ENCODE measurements at regions of chr2 and their contacts with region 1.

Region 1: GRCh38 chr2:230824406-230824978 is 40.2 kb upstream of the ITM2C start:
- DNase-seq: peak in 8 of 9 donors; percentile 36 to 76 (median 71)
- ATAC-seq: peak; percentile 84
- H3K4me3 ChIP-seq: no peak overlapping the region
- H3K4me3 Mint-ChIP-seq: peak overlapping the region in 9 of 10 donors; percentile 1 to 77 (median 23)
- H3K27ac ChIP-seq: no peak overlapping the region
- H3K27ac Mint-ChIP-seq: peak overlapping the region in 4 of 9 donors; percentile 21 to 64 (median 40)
- H3K4me1 ChIP-seq: no peaks in the 10 kb centered on the region
- H3K4me1 Mint-ChIP-seq: peaks cover 0 to 25% (median 9%) of the 10 kb centered on the region in 7 donors
- H3K27me3 ChIP-seq: peaks cover 0 to 5% of the 10 kb centered on the region in 2 donors
- H3K27me3 Mint-ChIP-seq: peaks cover 20 to 42% (median 30%) of the 10 kb centered on the region in 5 donors

Region 2: GRCh38 chr2:230840301-230840700 is 15.8 kb after region 1 on chr2:
- CTCF ChIA-PET with region 1: interaction called, 12 read pairs
- POLR2A ChIA-PET with region 1: no interaction called
- intact Hi-C with region 1: no loop called
- DNase-seq: no peak
- ATAC-seq: no peak
- H3K4me3 ChIP-seq: no peak overlapping the region
- H3K4me3 Mint-ChIP-seq: no peak overlapping the region
- H3K27ac ChIP-seq: no peak overlapping the region
- H3K27ac Mint-ChIP-seq: no peak overlapping the region
- H3K4me1 ChIP-seq: no peaks in the 10 kb centered on the region
- H3K4me1 Mint-ChIP-seq: peaks cover 0 to 10% (median 4%) of the 10 kb centered on the region in 7 donors
- H3K27me3 ChIP-seq: no peaks in the 10 kb centered on the region
- H3K27me3 Mint-ChIP-seq: peaks cover 0 to 31% (median 8%) of the 10 kb centered on the region in 5 donors

Region 3: GRCh38 chr2:230847883-230848388 is 23.4 kb after region 1 on chr2:
- CTCF ChIA-PET with region 1: interaction called, 5 read pairs
- POLR2A ChIA-PET with region 1: no interaction called
- intact Hi-C with region 1: loop called (anchors 1 kb)
- DNase-seq: peak; percentile 53 to 90 (median 75)
- ATAC-seq: peak; percentile 94
- H3K4me3 ChIP-seq: no peak overlapping the region
- H3K4me3 Mint-ChIP-seq: peak overlapping the region in 3 of 10 donors; percentile 18 to 68 (median 37)
- H3K27ac ChIP-seq: no peak overlapping the region
- H3K27ac Mint-ChIP-seq: peak overlapping the region in 1 of 9 donors; percentile 18
- H3K4me1 ChIP-seq: peaks cover 0 to 3% of the 10 kb centered on the region in 2 donors
- H3K4me1 Mint-ChIP-seq: peaks cover 3 to 12% (median 6%) of the 10 kb centered on the region in 7 donors
- H3K27me3 ChIP-seq: no peaks in the 10 kb centered on the region
- H3K27me3 Mint-ChIP-seq: peaks cover 10 to 58% (median 32%) of the 10 kb centered on the region in 5 donors

Region 4: GRCh38 chr2:230902180-230902899 is 77.8 kb after region 1 on chr2:
- CTCF ChIA-PET with region 1: no interaction called
- POLR2A ChIA-PET with region 1: no interaction called
- intact Hi-C with region 1: loop called (anchors 1 to 10 kb)
- DNase-seq: peak in 4 of 9 donors; percentile 22 to 49 (median 32)
- ATAC-seq: peak; percentile 71
- H3K4me3 ChIP-seq: no peak overlapping the region
- H3K4me3 Mint-ChIP-seq: no peak overlapping the region
- H3K27ac ChIP-seq: no peak overlapping the region
- H3K27ac Mint-ChIP-seq: peak overlapping the region in 1 of 9 donors; percentile 21
- H3K4me1 ChIP-seq: peaks cover 6 to 13% of the 10 kb centered on the region in 2 donors
- H3K4me1 Mint-ChIP-seq: peaks cover 2 to 25% (median 23%) of the 10 kb centered on the region in 7 donors
- H3K27me3 ChIP-seq: no peaks in the 10 kb centered on the region
- H3K27me3 Mint-ChIP-seq: peaks cover 0 to 46% (median 6%) of the 10 kb centered on the region in 5 donors

Region 5: DNA sequence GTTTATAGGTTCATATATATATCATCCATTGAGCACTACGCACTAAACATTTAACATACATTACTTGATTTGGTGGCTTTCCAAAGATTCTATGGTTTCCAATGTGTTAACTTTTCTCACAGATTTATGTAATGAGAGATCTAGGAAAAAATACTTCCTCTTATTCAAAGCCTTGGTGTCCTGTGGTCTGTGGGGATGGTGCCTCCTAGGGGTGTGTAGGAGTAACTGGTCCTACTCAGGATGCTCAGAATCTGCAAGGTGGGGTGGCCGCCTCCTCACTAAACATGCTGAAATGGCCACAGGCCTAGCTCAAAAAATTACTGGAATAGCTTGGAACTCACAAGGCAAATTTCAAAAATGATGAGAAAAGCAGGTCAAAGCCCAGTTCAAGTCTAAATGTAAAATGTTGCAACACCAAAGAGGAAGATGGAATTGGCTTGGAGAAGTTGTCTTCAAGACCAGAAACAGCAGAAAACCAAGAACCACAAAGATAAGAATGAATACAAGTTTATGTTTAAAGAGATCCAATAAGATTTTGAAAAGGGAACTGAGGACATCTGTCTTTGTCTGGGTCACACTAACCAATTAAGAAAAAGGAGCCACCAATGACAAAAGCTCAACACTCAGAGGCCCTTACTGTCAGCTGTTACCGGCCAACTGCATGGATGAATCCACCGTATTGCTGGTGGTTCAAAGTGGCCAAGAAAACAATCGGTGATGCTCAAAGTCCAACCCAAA is 89.1 kb after region 1 on chr2:
- CTCF ChIA-PET with region 1: interaction called, 9 read pairs
- POLR2A ChIA-PET with region 1: no interaction called
- intact Hi-C with region 1: loop called (anchors 1 to 10 kb)
- DNase-seq: peak in 4 of 9 donors; percentile 22 to 36 (median 29)
- ATAC-seq: peak; percentile 78
- H3K4me3 ChIP-seq: no peak overlapping the region
- H3K4me3 Mint-ChIP-seq: no peak overlapping the region
- H3K27ac ChIP-seq: no peak overlapping the region
- H3K27ac Mint-ChIP-seq: peak overlapping the region in 1 of 9 donors; percentile 7
- H3K4me1 ChIP-seq: no peaks in the 10 kb centered on the region
- H3K4me1 Mint-ChIP-seq: peaks cover 0 to 27% (median 15%) of the 10 kb centered on the region in 7 donors
- H3K27me3 ChIP-seq: no peaks in the 10 kb centered on the region
- H3K27me3 Mint-ChIP-seq: peaks cover 0 to 56% (median 3%) of the 10 kb centered on the region in 5 donors

Region 6: DNA sequence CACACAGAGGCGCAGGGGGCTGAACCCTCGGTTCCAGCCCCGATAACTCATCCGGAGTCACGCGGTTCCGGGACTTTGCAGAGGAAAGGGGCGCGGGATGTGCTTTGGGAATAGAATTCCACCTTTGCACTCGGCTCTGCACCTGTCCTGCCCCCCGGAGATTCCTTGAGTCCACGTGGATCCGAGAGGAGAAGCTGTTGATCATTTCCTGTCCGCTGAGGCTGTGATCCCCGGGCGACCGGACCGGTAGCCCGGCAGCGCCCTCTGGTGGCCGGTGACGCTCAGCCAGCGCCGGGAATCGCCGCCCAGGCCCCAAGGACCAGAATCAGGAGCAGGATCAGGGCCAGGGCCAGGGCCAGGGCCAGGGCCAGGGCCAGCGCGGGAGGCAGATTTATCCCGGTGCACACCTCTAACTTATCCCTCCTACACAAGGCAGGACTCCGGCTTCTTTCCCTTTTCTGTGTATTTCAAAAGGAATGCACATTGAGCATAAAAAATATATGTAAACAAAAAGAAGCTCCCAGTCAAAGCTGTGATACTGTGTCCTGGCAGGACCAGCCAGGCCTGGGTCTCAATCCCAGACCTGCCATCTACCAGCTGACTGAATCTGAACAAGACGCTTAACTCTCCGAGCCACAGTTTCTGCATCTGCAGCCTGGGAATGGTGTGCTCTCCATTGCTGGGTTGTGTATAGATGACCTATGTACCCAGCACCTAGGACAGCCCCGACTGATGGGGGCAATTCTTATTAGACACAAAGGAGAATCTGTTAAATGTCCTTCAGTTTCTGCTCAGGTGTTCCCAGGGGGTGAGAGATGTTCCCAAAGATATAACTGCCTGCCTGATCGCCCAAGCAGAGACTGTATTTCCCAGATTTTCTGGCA is 162.9 kb after region 1 on chr2:
- CTCF ChIA-PET with region 1: interaction called, 47 read pairs
- POLR2A ChIA-PET with region 1: interaction called, 5 read pairs
- intact Hi-C with region 1: loop called (anchors 1 kb)
- DNase-seq: peak; percentile 54 to 86 (median 68)
- ATAC-seq: peak; percentile 87
- H3K4me3 ChIP-seq: peak overlapping the region; percentile 59
- H3K4me3 Mint-ChIP-seq: peak overlapping the region; percentile 19 to 68 (median 47)
- H3K27ac ChIP-seq: no peak overlapping the region
- H3K27ac Mint-ChIP-seq: peak overlapping the region in 1 of 9 donors; percentile 40
- H3K4me1 ChIP-seq: peaks cover 4 to 11% of the 10 kb centered on the region in 2 donors
- H3K4me1 Mint-ChIP-seq: peaks cover 0 to 34% (median 3%) of the 10 kb centered on the region in 7 donors
- H3K27me3 ChIP-seq: no peaks in the 10 kb centered on the region
- H3K27me3 Mint-ChIP-seq: peaks cover 6 to 37% (median 13%) of the 10 kb centered on the region in 5 donors

Region 7: GRCh38 chr2:231084565-231084964 is 260.1 kb after region 1 on chr2:
- CTCF ChIA-PET with region 1: no interaction called
- POLR2A ChIA-PET with region 1: no interaction called
- intact Hi-C with region 1: no loop called
- DNase-seq: no peak
- ATAC-seq: peak; percentile 40
- H3K4me3 ChIP-seq: no peak overlapping the region
- H3K4me3 Mint-ChIP-seq: no peak overlapping the region
- H3K27ac ChIP-seq: no peak overlapping the region
- H3K27ac Mint-ChIP-seq: no peak overlapping the region
- H3K4me1 ChIP-seq: no peaks in the 10 kb centered on the region
- H3K4me1 Mint-ChIP-seq: peaks cover 0 to 2% (median 0%) of the 10 kb centered on the region in 7 donors
- H3K27me3 ChIP-seq: no peaks in the 10 kb centered on the region
- H3K27me3 Mint-ChIP-seq: no peaks in the 10 kb centered on the region

Region 8: DNA sequence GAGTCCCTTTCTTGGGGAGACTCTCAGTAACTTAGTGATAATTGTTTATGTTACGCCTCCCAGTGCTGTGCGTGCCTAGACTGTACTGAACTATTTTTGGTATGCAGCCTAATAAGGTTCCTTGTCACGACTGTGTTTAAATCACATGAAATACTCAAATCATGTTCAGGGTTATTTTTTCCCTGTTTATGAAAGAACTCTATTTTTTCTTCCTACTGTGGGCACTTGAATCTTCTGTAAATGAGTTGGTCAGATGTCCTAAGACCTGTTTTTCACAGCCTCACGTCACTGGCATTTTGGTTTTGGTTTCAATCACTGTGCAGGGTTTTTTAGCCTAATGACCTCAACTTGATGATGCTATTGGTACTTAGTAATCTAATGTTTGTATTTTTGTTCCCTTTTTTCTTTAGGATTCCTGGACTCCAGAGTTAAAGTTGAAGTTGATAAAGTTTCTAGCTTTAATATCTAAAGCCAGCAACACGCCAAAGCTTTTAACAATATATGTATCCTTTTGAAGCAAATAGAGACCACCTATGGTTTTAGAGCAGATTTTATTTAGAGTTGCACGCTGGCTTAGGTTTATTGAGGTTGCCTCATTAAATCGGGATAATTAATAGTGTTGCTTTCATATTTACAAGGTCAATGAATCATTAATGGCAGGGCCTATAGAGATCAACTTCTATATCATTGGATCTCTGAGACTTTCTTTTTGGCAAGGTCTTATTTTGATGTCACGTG is 398.0 kb after region 1 on chr2:
- CTCF ChIA-PET with region 1: no interaction called
- POLR2A ChIA-PET with region 1: no interaction called
- intact Hi-C with region 1: no loop called
- DNase-seq: no peak
- ATAC-seq: no peak
- H3K4me3 ChIP-seq: no peak overlapping the region
- H3K4me3 Mint-ChIP-seq: no peak overlapping the region
- H3K27ac ChIP-seq: no peak overlapping the region
- H3K27ac Mint-ChIP-seq: no peak overlapping the region
- H3K4me1 ChIP-seq: no peaks in the 10 kb centered on the region
- H3K4me1 Mint-ChIP-seq: no peaks in the 10 kb centered on the region
- H3K27me3 ChIP-seq: peaks cover 0 to 4% of the 10 kb centered on the region in 2 donors
- H3K27me3 Mint-ChIP-seq: no peaks in the 10 kb centered on the region

Measured in naive thymus-derived CD4-positive, alpha-beta T cell (primary cell).